ENCODE measurements at regions of chr14 and their contacts with region 1.

Region 1: DNA sequence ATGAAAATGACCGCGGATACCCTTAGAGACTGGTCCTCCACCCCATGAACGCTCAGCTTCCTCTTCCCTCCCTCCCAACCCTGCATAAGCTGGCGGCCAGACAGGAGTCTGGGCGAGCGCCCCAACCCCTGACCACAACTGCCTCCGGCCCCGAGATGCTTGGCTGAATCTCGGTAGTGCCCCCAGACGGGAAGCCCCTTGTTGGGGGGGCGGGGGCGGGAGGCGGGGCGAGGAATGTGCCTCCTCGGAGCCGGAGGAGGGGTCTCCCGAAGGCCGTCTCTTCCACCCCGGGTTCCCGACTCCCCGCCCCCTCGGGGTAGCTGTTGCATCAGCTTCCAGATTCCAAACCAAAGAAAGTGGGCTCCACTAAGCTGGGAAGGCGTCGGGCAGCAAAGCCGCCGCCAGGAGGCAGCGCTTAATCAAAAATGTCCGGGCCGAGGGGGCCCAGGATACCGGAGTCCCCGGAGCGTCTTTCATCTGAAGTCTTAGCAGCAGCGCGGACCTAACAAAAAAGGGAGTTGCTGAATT is 7.1 kb upstream of the MRPL52 start:
- DNase-seq: peak; percentile 84
- H3K4me3 ChIP-seq: peak overlapping the region; percentile 34
- H3K27ac ChIP-seq: peak overlapping the region; percentile 7
- H3K4me1 ChIP-seq: no peaks in the 10 kb centered on the region
- H3K27me3 ChIP-seq: no peaks in the 10 kb centered on the region
- CTCF ChIP-seq: peak; percentile 81

Region 2: GRCh38 chr14:22549981-22550673 is 272.5 kb before region 1 on chr14:
- intact Hi-C with region 1: loop called (anchors 5 kb)
- DNase-seq: no peak
- H3K4me3 ChIP-seq: no peak overlapping the region
- H3K27ac ChIP-seq: peak overlapping the region; percentile 53
- H3K4me1 ChIP-seq: no peaks in the 10 kb centered on the region
- H3K27me3 ChIP-seq: no peaks in the 10 kb centered on the region
- CTCF ChIP-seq: no peak

Region 3: GRCh38 chr14:22570132-22570949 is 252.3 kb before region 1 on chr14:
- intact Hi-C with region 1: loop called (anchors 5 kb)
- DNase-seq: peak; percentile 86
- H3K4me3 ChIP-seq: no peak overlapping the region
- H3K27ac ChIP-seq: peak overlapping the region; percentile 8
- H3K4me1 ChIP-seq: no peaks in the 10 kb centered on the region
- H3K27me3 ChIP-seq: no peaks in the 10 kb centered on the region
- CTCF ChIP-seq: peak; percentile 82

Region 4: DNA sequence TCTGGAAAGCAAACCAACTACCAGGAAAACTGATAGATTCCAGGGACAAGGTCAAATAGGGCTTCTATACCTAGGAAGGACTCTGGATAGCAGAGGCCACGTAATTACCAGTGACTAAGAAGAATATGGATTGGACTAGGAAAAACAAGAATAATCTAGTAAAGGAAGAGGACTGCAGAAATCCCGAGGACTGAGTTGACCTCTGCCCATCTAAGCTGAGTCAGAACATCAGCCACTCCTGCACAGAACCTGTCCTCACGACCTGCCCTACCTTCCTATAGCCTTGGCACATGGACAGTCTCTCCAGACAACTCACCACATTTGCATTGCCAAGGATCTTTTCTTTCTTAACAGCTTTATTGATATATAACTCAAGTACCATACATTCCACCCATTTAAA is 180.8 kb before region 1 on chr14:
- intact Hi-C with region 1: no loop called
- DNase-seq: no peak
- H3K4me3 ChIP-seq: no peak overlapping the region
- H3K27ac ChIP-seq: peak overlapping the region; percentile 32
- H3K4me1 ChIP-seq: no peaks in the 10 kb centered on the region
- H3K27me3 ChIP-seq: no peaks in the 10 kb centered on the region
- CTCF ChIP-seq: no peak

Region 5: DNA sequence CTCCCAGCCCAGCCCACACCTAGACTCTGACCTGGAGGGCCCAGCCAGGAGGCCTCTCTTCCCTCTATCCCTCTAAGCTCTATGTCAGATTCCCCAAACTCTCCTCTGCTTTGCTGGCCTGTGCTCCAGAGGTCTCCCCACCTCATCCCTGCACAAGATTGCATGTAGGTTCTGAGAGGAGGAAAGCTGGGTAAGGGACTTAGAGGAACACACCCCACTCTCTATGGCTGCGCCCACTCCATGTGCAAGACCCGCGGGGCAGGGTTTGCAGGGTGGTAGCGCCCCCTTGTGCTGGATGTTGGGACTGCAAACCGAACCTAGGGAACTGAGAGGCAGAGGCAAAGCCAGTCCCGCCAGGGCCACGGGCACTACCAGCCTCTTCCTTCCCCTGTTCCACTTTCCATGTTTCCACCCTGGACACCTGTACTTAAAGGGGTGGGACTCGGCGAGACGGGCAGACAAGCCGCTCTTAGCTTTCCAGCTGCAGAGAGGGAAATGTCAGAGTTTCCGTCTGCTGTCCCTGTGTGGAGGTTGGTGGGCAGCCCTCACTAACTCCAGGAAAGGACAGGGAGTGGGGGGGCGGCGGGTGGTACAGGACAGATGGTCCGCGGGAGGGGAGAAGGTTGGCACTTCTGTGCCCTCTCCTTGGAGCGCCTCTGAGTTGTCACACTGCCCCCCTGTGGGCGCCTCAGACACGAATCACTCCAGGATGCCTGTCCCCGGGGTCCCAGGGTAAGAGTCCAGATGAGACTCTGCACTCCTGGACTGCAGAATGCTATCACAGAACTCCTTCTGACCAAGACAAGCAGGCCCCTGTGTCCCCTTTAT is 30.5 kb after region 1 on chr14:
- intact Hi-C with region 1: loop called (anchors 2 kb)
- DNase-seq: peak; percentile 97
- H3K4me3 ChIP-seq: peak overlapping the region; percentile 28
- H3K27ac ChIP-seq: peak overlapping the region; percentile 64
- H3K4me1 ChIP-seq: peaks cover 4% of the 10 kb centered on the region
- H3K27me3 ChIP-seq: no peaks in the 10 kb centered on the region
- CTCF ChIP-seq: peak; percentile 94

Region 6: DNA sequence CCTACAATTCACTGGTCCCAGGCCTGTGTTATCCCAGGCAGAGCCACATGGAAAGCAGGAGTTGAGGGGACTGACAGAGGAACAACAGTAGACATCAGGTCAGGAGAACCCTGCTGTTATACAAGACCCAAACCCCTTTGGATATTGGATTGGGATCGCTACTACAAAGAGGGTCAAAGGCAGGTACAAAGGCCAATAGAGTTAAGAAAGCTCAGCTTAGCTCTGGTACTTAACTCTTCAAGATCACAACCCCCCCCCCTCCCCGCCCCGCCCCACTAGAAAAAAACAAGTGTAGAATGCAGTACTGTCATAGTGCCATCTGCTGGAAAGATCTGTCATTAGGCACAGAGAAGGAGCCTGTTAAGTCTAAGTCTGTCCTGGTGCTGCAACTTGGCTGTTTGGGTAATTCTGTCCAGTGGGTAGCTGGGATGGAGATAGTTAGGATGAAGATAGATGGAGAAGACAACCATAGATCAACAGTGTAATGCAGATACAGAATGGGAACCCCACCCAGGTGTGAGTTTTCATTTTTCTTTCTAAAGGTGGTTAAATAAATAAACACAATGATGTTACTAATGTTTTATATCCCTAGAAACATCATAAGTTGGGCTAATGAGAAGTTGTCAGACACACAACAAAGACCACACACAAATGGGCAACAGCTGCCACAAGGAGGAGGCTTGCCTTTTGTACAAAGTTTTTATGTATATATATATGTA is 77.6 kb after region 1 on chr14:
- intact Hi-C with region 1: no loop called
- DNase-seq: peak; percentile 55
- H3K4me3 ChIP-seq: no peak overlapping the region
- H3K27ac ChIP-seq: peak overlapping the region; percentile 14
- H3K4me1 ChIP-seq: no peaks in the 10 kb centered on the region
- H3K27me3 ChIP-seq: no peaks in the 10 kb centered on the region
- CTCF ChIP-seq: peak; percentile 39